ACHN (cell line): ENCODE measurements at regions of chr11 and their contacts with region 1.

Region 1: GRCh38 chr11:76235233-76236091 is 29.2 kb upstream of the WNT11 start:
- DNase-seq: peak; percentile 84

Region 2: GRCh38 chr11:76380967-76381719 is 145.7 kb after region 1 on chr11 and contains the starts of genes GVQW3 and THAP12:
- in situ Hi-C with region 1: no loop called
- DNase-seq: peak; percentile 95

Region 3: DNA sequence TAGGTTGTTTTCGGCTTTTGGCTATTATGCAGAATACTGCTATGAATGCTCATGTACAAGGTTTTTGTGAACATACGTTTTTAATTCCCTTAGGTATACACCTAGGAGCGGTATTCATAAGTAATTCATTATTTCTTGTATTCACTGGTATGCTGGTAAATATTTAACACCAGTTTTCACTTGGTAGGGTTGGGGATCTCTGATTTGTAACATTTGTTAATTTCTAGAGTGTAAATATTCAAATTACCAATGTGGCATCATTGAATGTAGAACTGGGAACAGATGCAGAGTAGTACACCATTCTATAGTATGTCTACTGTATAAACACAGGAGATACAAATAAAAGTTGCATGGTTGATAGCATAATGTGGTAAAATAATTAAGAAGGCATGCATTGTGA is 161.9 kb after region 1 on chr11:
- in situ Hi-C with region 1: no loop called
- DNase-seq: no peak

Region 4: GRCh38 chr11:76542436-76542835 is 307.0 kb after region 1 on chr11:
- in situ Hi-C with region 1: no loop called
- DNase-seq: no peak

Region 5: GRCh38 chr11:76680518-76681425 is 445.3 kb after region 1 on chr11:
- in situ Hi-C with region 1: loop called (anchors 25 kb)
- DNase-seq: peak; percentile 58